ENCODE measurements at regions of chr6 and their contacts with region 1.

Region 1: GRCh38 chr6:32796848-32797776 is 19.7 kb downstream of the HLA-DOB start:
- DNase-seq: peak; percentile 51 to 94 (median 82)

Region 2: GRCh38 chr6:32432050-32432450 is 365.1 kb before region 1 on chr6:
- intact Hi-C with region 1: loop called (anchors 5 kb)
- DNase-seq: no peak